CD8-positive, alpha-beta T cell (primary cell): ENCODE measurements at regions of chr19 and their contacts with region 1.

Region 1: GRCh38 chr19:9834726-9835506 is at the start of gene PIN1:
- DNase-seq: peak; percentile 98 to 100 (median 99)
- ATAC-seq: peak; percentile 95
- H3K4me3 ChIP-seq: peak within 1 kb of the TSS; percentile 71 to 94
- H3K4me3 Mint-ChIP-seq: peak within 1 kb of the TSS; percentile 90
- H3K27ac ChIP-seq: peak within 1 kb of the TSS; percentile 78 to 80
- H3K27ac Mint-ChIP-seq: peak within 1 kb of the TSS; percentile 94
- H3K4me1 ChIP-seq: peaks cover 15% of the 10 kb centered on the region
- H3K4me1 Mint-ChIP-seq: peaks cover 22% of the 10 kb centered on the region
- H3K27me3 ChIP-seq: no peaks in the 10 kb centered on the region
- H3K27me3 Mint-ChIP-seq: no peaks in the 10 kb centered on the region
- CTCF ChIP-seq: no peak
- total RNA-seq, gene PIN1: 42.4 to 42.7 TPM

Region 2: GRCh38 chr19:9741476-9742171 is 93.3 kb before region 1 on chr19:
- CTCF ChIA-PET with region 1: no interaction called
- POLR2A ChIA-PET with region 1: no interaction called
- intact Hi-C with region 1: no loop called
- DNase-seq: no peak
- ATAC-seq: no peak
- H3K4me3 ChIP-seq: no peak overlapping the region
- H3K4me3 Mint-ChIP-seq: no peak overlapping the region
- H3K27ac ChIP-seq: no peak overlapping the region
- H3K27ac Mint-ChIP-seq: no peak overlapping the region
- H3K4me1 ChIP-seq: no peaks in the 10 kb centered on the region
- H3K4me1 Mint-ChIP-seq: no peaks in the 10 kb centered on the region
- H3K27me3 ChIP-seq: no peaks in the 10 kb centered on the region
- H3K27me3 Mint-ChIP-seq: no peaks in the 10 kb centered on the region
- CTCF ChIP-seq: no peak

Region 3: GRCh38 chr19:9785367-9786331 is 49.3 kb before region 1 on chr19:
- CTCF ChIA-PET with region 1: no interaction called
- POLR2A ChIA-PET with region 1: no interaction called
- intact Hi-C with region 1: loop called in 1 of 2 experiments (anchors 1 kb)
- DNase-seq: peak; percentile 90 to 98 (median 97)
- ATAC-seq: peak; percentile 82
- H3K4me3 ChIP-seq: peak overlapping the region; percentile 95 to 97
- H3K4me3 Mint-ChIP-seq: peak overlapping the region; percentile 88
- H3K27ac ChIP-seq: peak overlapping the region; percentile 87 to 98
- H3K27ac Mint-ChIP-seq: peak overlapping the region; percentile 95
- H3K4me1 ChIP-seq: peaks cover 10% of the 10 kb centered on the region
- H3K4me1 Mint-ChIP-seq: peaks cover 29% of the 10 kb centered on the region
- H3K27me3 ChIP-seq: no peaks in the 10 kb centered on the region
- H3K27me3 Mint-ChIP-seq: no peaks in the 10 kb centered on the region
- CTCF ChIP-seq: no peak

Region 4: GRCh38 chr19:9857920-9858746 is 23.2 kb after region 1 on chr19:
- CTCF ChIA-PET with region 1: interaction called, 11 read pairs
- POLR2A ChIA-PET with region 1: interaction called, 12 read pairs
- intact Hi-C with region 1: no loop called
- DNase-seq: peak in 6 of 9 experiments; percentile 17 to 78 (median 45)
- ATAC-seq: peak; percentile 80
- H3K4me3 ChIP-seq: peak overlapping the region; percentile 50 to 63
- H3K4me3 Mint-ChIP-seq: peak overlapping the region; percentile 90
- H3K27ac ChIP-seq: peak overlapping the region; percentile 48 to 84
- H3K27ac Mint-ChIP-seq: peak overlapping the region; percentile 96
- H3K4me1 ChIP-seq: peaks cover 77% of the 10 kb centered on the region
- H3K4me1 Mint-ChIP-seq: peaks cover 86% of the 10 kb centered on the region
- H3K27me3 ChIP-seq: no peaks in the 10 kb centered on the region
- H3K27me3 Mint-ChIP-seq: no peaks in the 10 kb centered on the region
- CTCF ChIP-seq: no peak

Region 5: DNA sequence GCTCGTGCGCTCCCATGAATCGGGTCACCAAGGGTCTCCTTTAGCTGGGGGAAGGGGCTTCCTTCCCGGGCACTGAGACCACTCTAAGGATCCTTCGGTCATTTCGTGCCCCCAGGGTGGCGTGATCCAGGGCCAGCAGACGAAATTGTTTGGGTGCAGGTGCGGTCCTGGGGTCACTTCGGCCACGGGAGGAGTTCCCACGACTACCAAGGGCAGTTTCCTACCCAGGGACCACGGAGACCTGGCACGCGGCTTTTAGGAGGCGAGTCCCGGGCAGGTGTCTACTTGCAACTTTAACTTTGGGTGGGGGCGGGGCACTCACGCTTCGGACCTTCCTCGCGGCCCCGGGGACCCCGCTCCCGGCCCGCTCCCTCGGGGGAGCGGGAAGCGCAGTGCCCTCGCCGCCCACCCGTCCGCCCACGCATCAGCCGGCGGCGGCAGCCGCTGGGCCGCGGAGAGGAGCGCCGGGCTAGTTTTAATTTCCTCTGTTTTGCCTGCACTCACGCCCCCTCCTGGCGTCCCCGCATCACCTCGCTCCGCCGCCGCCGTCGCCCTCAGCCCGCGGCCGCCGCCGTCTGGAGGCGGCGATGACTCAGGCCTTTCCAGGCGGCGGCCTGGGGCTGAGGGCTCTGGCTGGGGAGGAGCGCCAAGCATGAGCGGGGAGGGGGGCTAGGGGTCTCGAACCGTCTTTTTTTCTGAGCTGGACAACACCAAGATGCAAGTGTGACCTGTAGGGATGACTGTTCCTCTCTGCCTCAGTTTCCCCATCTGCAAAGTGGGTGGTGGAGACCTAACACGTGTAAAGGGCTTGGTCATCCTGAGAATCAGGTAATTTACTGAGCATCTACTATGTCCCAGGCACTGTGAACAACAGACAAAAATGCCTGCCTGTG is 79.6 kb after region 1 on chr19:
- CTCF ChIA-PET with region 1: interaction called, 4 read pairs
- POLR2A ChIA-PET with region 1: no interaction called
- intact Hi-C with region 1: loop called (anchors 1 kb)
- DNase-seq: peak; percentile 69 to 89 (median 81)
- ATAC-seq: peak; percentile 92
- H3K4me3 ChIP-seq: peak overlapping the region; percentile 49 to 66
- H3K4me3 Mint-ChIP-seq: peak overlapping the region; percentile 73
- H3K27ac ChIP-seq: no peak overlapping the region
- H3K27ac Mint-ChIP-seq: no peak overlapping the region
- H3K4me1 ChIP-seq: peaks cover 15% of the 10 kb centered on the region
- H3K4me1 Mint-ChIP-seq: peaks cover 8% of the 10 kb centered on the region
- H3K27me3 ChIP-seq: peaks cover 0 to 15% of the 10 kb centered on the region in 2 experiments
- H3K27me3 Mint-ChIP-seq: peaks cover 30% of the 10 kb centered on the region
- CTCF ChIP-seq: peak; percentile 73

Region 6: DNA sequence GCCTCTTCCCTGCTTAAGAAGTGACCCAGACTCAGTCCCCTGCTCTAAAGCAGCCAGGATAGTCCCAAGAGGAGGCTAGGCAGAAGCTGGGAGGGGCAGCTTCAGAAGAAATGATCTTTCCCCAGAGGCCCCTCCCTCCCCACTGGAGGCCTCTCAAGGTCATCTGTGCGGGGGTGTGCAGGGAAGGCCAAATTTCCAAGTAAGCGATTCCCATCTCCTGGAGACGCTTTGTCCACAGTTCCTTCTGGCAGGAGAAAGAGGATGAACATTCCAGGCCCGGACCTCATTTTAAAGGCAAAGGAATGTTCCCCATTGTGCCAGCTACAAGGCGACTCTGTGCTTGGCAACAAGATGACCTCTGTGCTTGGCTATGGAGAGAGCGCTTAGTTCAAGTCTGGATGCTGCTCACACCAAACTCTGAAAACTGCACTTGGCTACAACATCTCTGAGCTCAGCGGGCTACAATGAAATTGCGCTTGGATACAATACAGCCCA is 151.9 kb after region 1 on chr19:
- CTCF ChIA-PET with region 1: no interaction called
- POLR2A ChIA-PET with region 1: no interaction called
- intact Hi-C with region 1: no loop called
- DNase-seq: no peak
- ATAC-seq: no peak
- H3K4me3 ChIP-seq: no peak overlapping the region
- H3K4me3 Mint-ChIP-seq: no peak overlapping the region
- H3K27ac ChIP-seq: no peak overlapping the region
- H3K27ac Mint-ChIP-seq: no peak overlapping the region
- H3K4me1 ChIP-seq: no peaks in the 10 kb centered on the region
- H3K4me1 Mint-ChIP-seq: no peaks in the 10 kb centered on the region
- H3K27me3 ChIP-seq: no peaks in the 10 kb centered on the region
- H3K27me3 Mint-ChIP-seq: peaks cover 8% of the 10 kb centered on the region
- CTCF ChIP-seq: no peak